MCF 10A (cell line): ENCODE measurements at regions of chr7 and their contacts with region 1.

Region 1: DNA sequence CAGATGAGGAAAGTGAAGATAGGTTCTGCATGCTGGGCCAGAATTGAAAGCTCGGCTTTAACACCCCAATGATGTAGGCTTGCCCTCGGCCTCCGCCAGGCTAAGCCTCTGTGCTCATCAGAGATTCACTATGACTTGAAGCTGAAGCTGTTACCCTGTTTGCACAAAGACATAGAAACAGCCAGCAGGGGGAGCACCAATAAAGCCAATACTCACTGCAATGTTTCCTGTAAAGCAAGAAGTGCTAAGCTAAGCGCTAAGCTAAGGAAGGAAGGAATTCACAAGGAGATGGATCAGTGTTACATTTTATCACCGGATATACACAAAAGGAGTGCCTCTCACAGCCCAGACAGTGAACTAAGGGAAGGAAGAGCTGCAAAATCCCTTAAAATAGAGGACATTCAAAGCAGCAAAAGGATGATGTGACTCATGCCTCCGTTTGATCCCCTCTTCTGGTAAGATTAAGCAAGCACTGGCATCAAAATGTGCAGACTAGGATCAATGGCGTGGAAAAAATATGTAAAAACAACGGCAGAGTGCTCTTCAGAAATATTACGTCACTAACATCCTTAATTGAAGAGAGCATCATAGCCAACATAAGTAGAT is 153.8 kb downstream of the COBL start:
- DNase-seq: peak; percentile 89
- H3K4me3 Mint-ChIP-seq: no peak overlapping the region
- H3K27ac Mint-ChIP-seq: no peak overlapping the region
- H3K4me1 Mint-ChIP-seq: peaks cover 5% of the 10 kb centered on the region
- H3K27me3 Mint-ChIP-seq: no peaks in the 10 kb centered on the region
- CTCF ChIP-seq: peak; percentile 55

Region 2: DNA sequence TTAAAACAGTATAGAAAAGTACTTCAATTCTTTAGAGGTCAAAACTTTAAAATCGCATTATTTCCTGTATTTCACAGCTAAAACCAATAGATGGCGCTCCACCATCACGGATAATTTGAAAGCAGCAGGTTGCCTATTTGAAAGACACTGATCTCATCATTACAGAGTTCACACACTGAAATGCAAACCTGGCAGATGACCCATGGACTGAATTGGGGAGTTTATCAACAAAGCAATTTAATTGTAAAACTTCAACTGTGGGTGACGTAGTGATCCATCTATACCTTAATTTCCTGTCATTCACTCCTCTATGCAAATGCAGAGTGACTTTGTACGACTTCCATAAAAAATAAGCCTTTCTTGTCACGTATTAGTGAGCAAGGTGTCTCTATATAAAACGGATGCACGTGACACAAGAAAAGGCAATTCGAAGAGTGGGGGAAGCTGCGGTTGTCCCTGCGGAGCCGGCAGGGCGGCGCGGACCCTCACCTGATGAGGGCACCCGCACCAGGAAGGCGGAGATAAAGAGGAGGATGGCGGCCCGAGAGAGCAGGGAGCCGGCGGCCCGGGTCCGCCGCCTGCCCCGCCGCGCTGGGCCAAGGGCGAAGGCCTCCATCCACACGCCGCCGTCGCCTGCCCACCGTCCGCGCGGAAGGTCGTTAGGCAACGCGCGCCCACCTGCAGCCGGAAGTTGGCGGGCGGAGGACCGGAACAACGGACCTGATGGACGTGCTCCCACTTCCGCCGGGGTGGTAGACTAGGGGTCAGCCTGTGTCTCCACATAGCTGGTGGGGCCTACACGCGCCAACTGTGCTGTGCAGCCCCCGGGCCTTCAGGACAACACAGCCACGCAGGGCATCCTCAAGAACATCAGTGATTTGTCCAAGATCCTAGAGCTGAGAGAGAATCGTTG is 1070.0 kb before region 1 on chr7 and contains the start of gene ZPBP:
- CTCF ChIA-PET with region 1: interaction called, 13 read pairs
- POLR2A ChIA-PET with region 1: no interaction called
- intact Hi-C with region 1: loop called (anchors 1 kb)
- DNase-seq: peak; percentile 52
- H3K4me3 Mint-ChIP-seq: no peak within 1 kb of the TSS
- H3K27ac Mint-ChIP-seq: no peak within 1 kb of the TSS
- H3K4me1 Mint-ChIP-seq: no peaks in the 10 kb centered on the region
- H3K27me3 Mint-ChIP-seq: peaks cover 60% of the 10 kb centered on the region
- CTCF ChIP-seq: peak; percentile 61
- total RNA-seq, gene ZPBP: not detected in 2 replicates

Region 3: GRCh38 chr7:50679218-50680007 is 483.4 kb before region 1 on chr7:
- CTCF ChIA-PET with region 1: interaction called, 42 read pairs
- POLR2A ChIA-PET with region 1: no interaction called
- intact Hi-C with region 1: no loop called
- DNase-seq: peak; percentile 58
- H3K4me3 Mint-ChIP-seq: no peak overlapping the region
- H3K27ac Mint-ChIP-seq: no peak overlapping the region
- H3K4me1 Mint-ChIP-seq: peaks cover 6% of the 10 kb centered on the region
- H3K27me3 Mint-ChIP-seq: no peaks in the 10 kb centered on the region
- CTCF ChIP-seq: peak; percentile 40

Region 4: DNA sequence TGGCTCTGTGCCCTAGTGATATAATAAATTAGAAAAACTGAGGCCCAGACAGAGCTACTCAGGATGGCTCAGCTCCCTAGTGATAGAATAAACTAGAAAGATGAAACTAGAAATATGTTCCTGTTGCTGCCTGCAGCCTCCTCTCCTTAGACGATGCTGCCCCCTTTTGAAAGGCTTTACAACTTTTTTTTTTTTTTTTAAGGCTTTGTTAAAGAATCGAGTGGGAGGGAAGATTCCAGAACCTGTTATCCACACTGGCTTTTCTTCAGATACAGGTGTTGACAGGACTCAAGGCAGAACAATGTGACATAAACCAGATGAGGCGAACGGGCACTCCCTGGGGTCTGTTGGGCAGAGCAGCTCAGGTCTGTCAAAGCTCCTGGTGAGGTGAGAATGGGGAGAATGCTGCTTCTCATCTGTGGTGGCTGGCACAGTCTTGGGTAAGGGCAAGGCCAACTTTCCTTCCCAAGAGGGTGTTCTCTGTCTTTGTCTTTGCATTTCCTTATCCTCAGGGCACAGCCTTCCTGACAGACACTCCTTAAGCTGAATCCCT is 21.3 kb before region 1 on chr7:
- CTCF ChIA-PET with region 1: interaction called, 126 read pairs
- POLR2A ChIA-PET with region 1: no interaction called
- intact Hi-C with region 1: no loop called
- DNase-seq: peak; percentile 55
- H3K4me3 Mint-ChIP-seq: no peak overlapping the region
- H3K27ac Mint-ChIP-seq: no peak overlapping the region
- H3K4me1 Mint-ChIP-seq: peaks cover 27% of the 10 kb centered on the region
- H3K27me3 Mint-ChIP-seq: no peaks in the 10 kb centered on the region
- CTCF ChIP-seq: peak; percentile 71

Region 5: GRCh38 chr7:51198654-51199053 is 35.8 kb after region 1 on chr7:
- CTCF ChIA-PET with region 1: interaction called, 17 read pairs
- POLR2A ChIA-PET with region 1: no interaction called
- intact Hi-C with region 1: no loop called
- DNase-seq: peak; percentile 37
- H3K4me3 Mint-ChIP-seq: no peak overlapping the region
- H3K27ac Mint-ChIP-seq: no peak overlapping the region
- H3K4me1 Mint-ChIP-seq: peaks cover 5% of the 10 kb centered on the region
- H3K27me3 Mint-ChIP-seq: no peaks in the 10 kb centered on the region
- CTCF ChIP-seq: no peak

Region 6: GRCh38 chr7:51324206-51324884 is 161.5 kb after region 1 on chr7:
- CTCF ChIA-PET with region 1: interaction called, 14 read pairs
- POLR2A ChIA-PET with region 1: interaction called, 3 read pairs
- intact Hi-C with region 1: no loop called
- DNase-seq: peak; percentile 96
- H3K4me3 Mint-ChIP-seq: no peak overlapping the region
- H3K27ac Mint-ChIP-seq: peak overlapping the region; percentile 94
- H3K4me1 Mint-ChIP-seq: peaks cover 21% of the 10 kb centered on the region
- H3K27me3 Mint-ChIP-seq: no peaks in the 10 kb centered on the region
- CTCF ChIP-seq: no peak